Body of pancreas (tissue), 4 donors: ENCODE measurements at regions of chr14 and their contacts with region 1.

Region 1: DNA sequence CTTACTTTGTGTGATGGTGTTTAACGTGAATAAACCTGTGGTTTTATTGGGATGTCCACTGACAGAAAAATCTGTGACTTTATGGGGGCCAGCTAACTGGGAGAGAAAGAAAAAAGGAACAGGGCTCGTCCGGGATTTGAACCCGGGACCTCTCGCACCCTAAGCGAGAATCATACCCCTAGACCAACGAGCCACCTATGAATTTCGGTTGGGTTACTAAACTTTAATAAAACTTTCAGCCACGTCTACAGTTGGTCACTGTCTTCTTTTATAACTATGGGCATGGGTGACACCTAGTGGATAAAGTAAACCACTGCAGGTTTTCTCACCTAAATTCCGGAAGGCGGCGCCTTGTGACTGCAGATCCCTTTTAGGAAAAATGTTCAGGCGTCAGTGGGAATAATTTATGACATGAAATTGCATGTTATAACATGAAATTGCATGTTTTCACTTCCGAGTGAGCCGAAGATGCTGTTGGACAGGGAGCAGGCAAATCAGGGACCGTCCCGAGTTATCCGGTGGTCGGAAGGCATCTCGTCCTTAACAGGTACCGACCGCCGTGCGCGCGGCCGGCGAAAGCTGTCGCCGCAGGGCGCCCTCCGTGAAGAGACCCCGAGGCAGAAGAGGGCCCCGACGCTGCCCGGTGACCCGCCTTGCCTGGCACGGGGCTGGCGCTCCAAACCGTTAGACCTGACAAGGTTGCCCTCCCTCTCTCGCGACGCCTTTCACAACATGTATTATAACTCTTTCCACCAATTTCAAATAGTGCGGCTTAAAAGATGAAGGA is 18.2 kb upstream of the RNASE12 start:
- DNase-seq: peak; percentile 76 to 88 (median 80)
- ATAC-seq: peak; percentile 71
- H3K4me3 ChIP-seq: peak overlapping the region; percentile 78 to 97
- H3K27ac ChIP-seq: peak overlapping the region in 3 of 4 donors; percentile 36 to 79 (median 63)
- H3K4me1 ChIP-seq: peaks cover 13% of the 10 kb centered on the region
- H3K27me3 ChIP-seq: no peaks in the 10 kb centered on the region
- CTCF ChIP-seq: peak; percentile 86 to 100 (median 99)
- POLR2A ChIP-seq: no peak

Region 2: GRCh38 chr14:20327005-20327869 is 282.2 kb before region 1 on chr14:
- intact Hi-C with region 1: loop called (anchors 5 kb)
- DNase-seq: peak in 1 of 4 donors; percentile 43
- ATAC-seq: peak; percentile 65
- H3K4me3 ChIP-seq: no peak overlapping the region
- H3K27ac ChIP-seq: peak overlapping the region in 2 of 4 donors; percentile 7 to 19
- H3K4me1 ChIP-seq: peaks cover 12% of the 10 kb centered on the region
- H3K27me3 ChIP-seq: no peaks in the 10 kb centered on the region
- CTCF ChIP-seq: peak; percentile 32 to 83 (median 77)
- POLR2A ChIP-seq: no peak

Region 3: DNA sequence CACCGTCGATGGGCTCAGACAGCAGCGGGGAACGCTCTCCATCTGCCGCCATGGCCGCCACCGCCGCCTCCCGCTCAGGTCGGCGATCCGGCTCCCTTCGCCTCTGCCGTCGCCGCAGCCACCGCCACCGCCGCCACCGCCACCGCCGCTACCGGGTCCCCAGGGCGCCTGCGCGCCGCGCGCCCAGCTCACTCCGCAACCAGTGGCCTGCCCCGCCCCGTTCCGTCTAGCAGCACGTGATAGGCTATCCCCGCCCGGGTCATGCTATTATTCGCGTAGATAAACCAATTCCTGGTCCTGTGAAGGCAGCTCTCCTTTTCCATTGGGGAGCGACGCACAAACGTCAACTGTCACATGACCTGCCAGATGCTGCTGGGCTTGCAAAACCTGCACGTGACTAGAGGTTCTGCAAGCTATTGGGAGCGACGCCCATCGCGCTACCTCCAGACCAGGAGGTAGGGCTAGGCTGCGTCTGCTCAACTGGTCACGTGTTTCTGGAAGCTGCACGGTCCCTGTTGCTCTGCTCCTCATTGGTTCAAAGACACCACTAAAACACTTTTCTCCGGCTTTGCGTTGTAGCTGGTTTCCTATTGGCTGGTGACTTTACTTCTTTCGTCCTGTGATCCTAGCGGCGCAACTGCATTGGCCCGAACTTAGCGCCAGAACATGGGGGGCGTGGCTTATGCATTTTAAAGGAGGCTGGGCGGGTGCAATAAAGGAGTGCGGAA is 148.0 kb before region 1 on chr14 and contains the start of gene PIP4P1:
- intact Hi-C with region 1: loop called (anchors 10 kb)
- DNase-seq: peak; percentile 99 to 100 (median 99)
- ATAC-seq: peak; percentile 95
- H3K4me3 ChIP-seq: peak within 1 kb of the TSS; percentile 52 to 80
- H3K27ac ChIP-seq: peak within 1 kb of the TSS; percentile 84 to 95 (median 88)
- H3K4me1 ChIP-seq: peaks cover 37% of the 10 kb centered on the region
- H3K27me3 ChIP-seq: no peaks in the 10 kb centered on the region
- CTCF ChIP-seq: peak in 1 of 7 experiments; percentile 20
- POLR2A ChIP-seq: peak in 2 of 3 donors; percentile 62 to 80
- total RNA-seq, gene PIP4P1: 12.2 to 12.5 TPM